ENCODE measurements at regions of chr6 and their contacts with region 1.

Region 1: DNA sequence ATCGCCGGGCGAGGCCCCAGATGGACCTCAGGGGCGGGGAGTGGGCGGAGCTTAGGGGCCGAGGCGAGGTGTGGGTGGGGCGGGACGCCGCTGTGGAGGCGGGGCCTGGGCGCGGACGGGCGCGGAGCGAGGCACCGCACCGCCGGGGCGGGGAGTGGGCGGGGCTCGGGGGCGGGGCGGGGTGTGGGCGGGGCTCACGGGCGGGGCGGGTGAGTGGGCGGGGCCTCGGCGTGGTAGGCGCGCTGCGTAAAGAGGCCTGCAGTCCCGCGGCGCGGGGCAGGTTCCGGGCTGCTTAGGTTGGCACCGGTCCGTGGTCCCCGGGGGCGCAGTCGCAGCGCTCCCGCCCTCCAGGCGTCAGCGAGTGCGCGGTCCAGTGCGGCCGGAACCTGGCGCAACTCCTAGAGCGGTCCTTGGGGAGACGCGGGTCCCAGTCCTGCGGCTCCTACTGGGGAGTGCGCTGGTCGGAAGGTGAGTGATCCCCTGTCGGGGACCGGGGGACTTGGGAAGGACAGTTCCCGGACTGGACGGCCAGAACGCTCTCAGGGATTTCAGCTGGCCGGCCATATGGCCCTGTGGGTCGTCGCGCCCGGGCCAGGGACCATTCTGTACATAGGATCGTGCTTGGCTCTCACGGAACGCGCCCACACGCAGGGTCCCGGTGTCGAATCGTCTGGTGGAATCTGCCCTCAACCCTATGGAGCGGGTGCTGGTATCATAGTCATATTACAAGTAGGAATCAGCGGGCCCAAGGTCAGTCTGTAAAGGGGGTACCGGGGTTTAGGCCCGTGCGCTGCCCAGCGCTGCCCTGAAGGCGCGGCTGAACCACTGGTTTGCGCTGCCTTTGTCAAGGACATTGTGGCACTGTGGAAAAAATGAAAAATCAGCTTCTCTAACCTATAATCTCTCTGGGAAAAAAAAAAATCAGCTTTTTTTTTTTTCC is at the start of gene NQO2:
- DNase-seq: peak; percentile 93 to 96
- ATAC-seq: peak; percentile 84 to 87 (median 84)
- H3K4me3 ChIP-seq: peak within 1 kb of the TSS; percentile 95
- H3K27ac ChIP-seq: peak within 1 kb of the TSS; percentile 99
- H3K4me1 ChIP-seq: peaks cover 20% of the 10 kb centered on the region
- H3K27me3 ChIP-seq: no peaks in the 10 kb centered on the region
- CTCF ChIP-seq: no peak
- total RNA-seq, gene NQO2: 42.8 to 129 (median 101) TPM

Region 2: DNA sequence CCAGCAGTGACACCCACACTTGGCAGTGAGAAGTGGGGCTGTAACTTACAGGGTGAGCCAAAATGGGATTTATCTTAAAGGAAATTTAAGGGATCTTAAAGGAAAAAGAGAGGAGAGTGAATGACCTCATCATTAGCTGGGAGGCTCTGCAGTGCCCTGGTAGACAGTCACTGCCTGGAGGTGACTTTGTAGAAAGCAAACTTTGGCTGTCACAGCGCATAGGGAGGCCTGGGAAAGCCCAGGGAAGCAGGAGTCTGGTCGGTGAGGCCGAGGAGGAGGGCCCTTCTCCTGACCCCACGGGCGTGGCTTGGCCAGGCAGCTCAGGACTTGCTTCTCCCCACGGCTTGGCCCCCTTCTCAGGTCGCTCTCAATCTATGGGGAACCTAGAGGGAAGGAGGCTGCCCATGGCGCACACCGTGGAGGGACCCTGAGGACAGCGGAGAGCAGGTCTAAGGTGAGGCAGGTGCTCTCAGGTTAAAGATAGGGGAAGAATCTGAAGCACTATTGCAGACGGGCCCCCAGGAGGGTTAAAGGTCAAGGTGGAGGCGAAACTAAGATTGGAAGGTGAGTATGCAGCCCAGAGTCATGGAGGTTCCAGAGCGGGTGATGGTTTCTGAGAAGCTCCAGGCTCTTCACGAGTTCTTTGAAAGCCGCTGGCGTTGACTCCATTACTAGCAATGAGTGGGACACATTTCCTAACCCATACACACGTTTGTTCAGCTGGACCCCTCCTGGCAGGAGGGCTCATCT is 52.8 kb after region 1 on chr6:
- intact Hi-C with region 1: loop called (anchors 1 kb)
- DNase-seq: no peak
- ATAC-seq: no peak
- H3K4me3 ChIP-seq: no peak overlapping the region
- H3K27ac ChIP-seq: no peak overlapping the region
- H3K4me1 ChIP-seq: no peaks in the 10 kb centered on the region
- H3K27me3 ChIP-seq: peaks cover 0 to 3% (median 0%) of the 10 kb centered on the region in 3 donors
- CTCF ChIP-seq: no peak

Measured in psoas muscle (tissue), 8 donors.